ENCODE measurements at regions of chr2 and their contacts with region 1.

Region 1: GRCh38 chr2:163657281-163657656 is 78.5 kb downstream of the FIGN start:
- DNase-seq: no peak

Region 2: GRCh38 chr2:163401481-163401880 is 255.8 kb before region 1 on chr2:
- intact Hi-C with region 1: no loop called
- DNase-seq: no peak

Region 3: DNA sequence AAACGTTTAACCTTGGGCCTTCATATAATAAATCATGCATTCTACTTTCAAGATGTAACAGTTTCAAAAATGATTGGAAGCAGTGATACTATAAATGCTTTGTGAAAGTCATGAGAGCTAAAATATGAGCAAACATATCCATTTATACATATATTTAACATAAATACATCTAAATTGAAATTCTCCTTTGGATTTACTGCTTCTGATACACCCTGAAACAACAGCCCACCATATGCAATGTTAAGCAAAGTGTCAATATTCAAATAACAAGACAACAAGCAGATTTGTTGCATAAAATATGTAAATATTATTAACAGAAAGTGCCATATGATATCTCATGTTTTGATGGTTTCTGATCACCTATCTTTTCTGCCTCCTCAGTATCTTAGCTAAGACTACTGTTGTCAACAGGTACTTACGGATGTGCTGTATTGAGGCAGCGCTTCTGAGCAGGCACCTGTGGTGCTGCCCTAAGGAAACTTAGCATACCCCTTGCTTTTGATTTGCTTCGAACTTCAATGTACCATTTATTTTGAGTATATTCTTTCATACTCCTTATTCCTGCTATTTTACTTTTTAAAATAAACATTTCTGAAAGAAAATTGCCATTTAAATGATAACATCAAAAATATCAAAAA is 72.5 kb after region 1 on chr2:
- intact Hi-C with region 1: loop called (anchors 5 kb)
- DNase-seq: no peak

Measured in cardiac septum (tissue), 1 donor.